BJ (cell line): ENCODE measurements at regions of chr19 and their contacts with region 1.

Region 1: GRCh38 chr19:32928806-32929205 is 43.0 kb downstream of the CEP89 start:
- DNase-seq: no peak
- H3K4me3 ChIP-seq: no peak overlapping the region
- H3K27me3 ChIP-seq: no peaks in the 10 kb centered on the region
- CTCF ChIP-seq: no peak

Region 2: GRCh38 chr19:32866564-32867265 is 62.1 kb before region 1 on chr19:
- CTCF ChIA-PET with region 1: no interaction called
- POLR2A ChIA-PET with region 1: interaction called, 13 read pairs
- DNase-seq: no peak
- H3K4me3 ChIP-seq: no peak overlapping the region
- H3K27me3 ChIP-seq: peaks cover 5% of the 10 kb centered on the region
- CTCF ChIP-seq: no peak

Region 3: DNA sequence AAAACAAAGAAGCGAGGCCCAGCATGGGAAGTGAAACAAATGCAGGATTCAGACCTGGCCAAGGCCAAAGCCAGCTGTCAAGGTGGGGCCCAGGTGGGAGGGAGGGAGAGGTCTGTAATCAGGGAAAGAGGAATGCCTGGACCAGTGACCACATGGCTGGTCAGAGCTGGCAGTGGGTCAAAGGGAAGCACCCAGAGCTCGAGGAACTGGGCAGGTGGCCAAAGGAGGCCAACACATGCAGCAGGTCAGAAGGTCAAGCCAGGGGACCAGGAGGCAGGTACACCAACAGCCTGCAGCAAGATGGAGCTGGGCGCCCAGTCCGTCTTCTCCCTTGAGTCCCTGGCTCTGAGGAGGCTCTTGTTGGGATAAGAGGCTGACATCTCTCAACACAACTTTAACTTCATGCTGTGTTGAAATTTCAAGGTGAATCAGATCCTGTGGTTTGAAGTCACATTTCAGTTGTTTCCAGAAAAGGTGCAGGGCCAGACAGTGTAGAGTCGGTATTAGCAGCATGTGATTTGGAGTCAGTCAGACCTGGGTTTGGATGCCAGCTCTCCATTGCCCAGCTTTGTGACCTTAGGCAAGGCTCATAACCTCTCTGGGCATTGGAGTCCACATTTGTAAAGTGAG is 169.3 kb after region 1 on chr19:
- CTCF ChIA-PET with region 1: no interaction called
- POLR2A ChIA-PET with region 1: interaction called, 25 read pairs
- DNase-seq: no peak
- H3K4me3 ChIP-seq: no peak overlapping the region
- H3K27me3 ChIP-seq: no peaks in the 10 kb centered on the region
- CTCF ChIP-seq: no peak